ENCODE measurements at regions of chr6 and their contacts with region 1.

Region 1: GRCh38 chr6:7145885-7146828 is 38.4 kb downstream of the RREB1 start:
- DNase-seq: peak in 2 of 4 experiments; percentile 63 to 70
- ATAC-seq: peak; percentile 38
- H3K4me3 ChIP-seq: no peak overlapping the region
- H3K27ac ChIP-seq: peak overlapping the region; percentile 92
- H3K4me1 ChIP-seq: peaks cover 60 to 89% of the 10 kb centered on the region in 2 experiments
- H3K27me3 ChIP-seq: no peaks in the 10 kb centered on the region
- CTCF ChIP-seq: 0 out of 6 replicates have a peak, but pooled peaks of 1 of the 3 experiments have one; percentile 5
- EP300 ChIP-seq: no peak; the same call in 1 of the 2 replicates
- POLR2A ChIP-seq: peak; percentile 56
- RAD21 ChIP-seq: no peak; a peak in 1 of 4 replicates

Region 2: DNA sequence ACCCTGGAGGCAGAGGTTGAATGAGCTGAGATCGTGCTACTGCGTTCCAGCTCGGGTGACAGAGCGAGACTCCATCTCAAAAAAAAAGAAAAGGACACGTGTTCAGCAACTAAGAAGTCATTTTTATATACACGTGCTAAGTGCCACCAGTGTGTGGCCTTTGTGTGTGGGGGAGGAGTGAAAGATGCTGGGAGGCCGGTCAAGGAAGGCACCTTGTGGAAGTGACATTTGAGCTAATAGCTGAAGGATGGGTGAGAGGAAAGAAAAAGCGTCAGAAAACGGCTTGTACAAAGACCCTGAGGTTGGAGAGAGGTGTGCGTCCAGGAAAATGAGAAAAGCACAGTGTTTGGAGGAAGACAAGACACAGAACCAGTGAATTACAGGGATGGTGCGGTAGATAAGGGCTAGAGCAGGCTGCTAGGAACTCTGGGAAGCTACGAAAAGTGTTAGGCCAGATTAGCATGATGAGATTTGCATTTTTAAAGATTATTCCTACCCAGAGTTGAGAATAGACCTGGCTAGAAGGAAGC is 26.8 kb before region 1 on chr6:
- CTCF ChIA-PET with region 1: no interaction called
- POLR2A ChIA-PET with region 1: interaction called, 11 read pairs
- in situ Hi-C with region 1: no loop called
- intact Hi-C with region 1: no loop called
- DNase-seq: peak; percentile 60 to 86 (median 72)
- ATAC-seq: peak; percentile 82
- H3K4me3 ChIP-seq: peak overlapping the region; percentile 2; the same call in 1 of the 2 replicates
- H3K27ac ChIP-seq: peak overlapping the region; percentile 68
- H3K4me1 ChIP-seq: peaks cover 38 to 45% of the 10 kb centered on the region in 2 experiments
- H3K27me3 ChIP-seq: no peaks in the 10 kb centered on the region
- CTCF ChIP-seq: no peak
- EP300 ChIP-seq: peak; percentile 66; the same call in 1 of the 2 replicates
- POLR2A ChIP-seq: peak; percentile 76
- RAD21 ChIP-seq: no peak

Measured in K562 (cell line).